Activated T-helper 2 cell treated with anti-CD3 and anti-CD28 coated beads, Interferon-gamma antibody, Interleukin-2, Interleukin-4, amounts not matched to agents 10 μg/mL and 5 μg/mL and 100 μg/mL, durations not matched to agents 14 hours and 24 hours and 36 hours (primary cell): ENCODE measurements at regions of chr4 and their contacts with region 1.

Region 1: GRCh38 chr4:39638354-39639240 is at the start of gene SMIM14:
- DNase-seq: peak; percentile 86
- H3K4me3 Mint-ChIP-seq: peak within 1 kb of the TSS; percentile 86
- H3K27ac Mint-ChIP-seq: peak within 1 kb of the TSS; percentile 67
- H3K4me1 Mint-ChIP-seq: peaks cover 27% of the 10 kb centered on the region
- H3K27me3 Mint-ChIP-seq: peaks cover 28% of the 10 kb centered on the region
- total RNA-seq, gene SMIM14: 1.7 and 1.9 TPM in 2 replicates

Region 2: DNA sequence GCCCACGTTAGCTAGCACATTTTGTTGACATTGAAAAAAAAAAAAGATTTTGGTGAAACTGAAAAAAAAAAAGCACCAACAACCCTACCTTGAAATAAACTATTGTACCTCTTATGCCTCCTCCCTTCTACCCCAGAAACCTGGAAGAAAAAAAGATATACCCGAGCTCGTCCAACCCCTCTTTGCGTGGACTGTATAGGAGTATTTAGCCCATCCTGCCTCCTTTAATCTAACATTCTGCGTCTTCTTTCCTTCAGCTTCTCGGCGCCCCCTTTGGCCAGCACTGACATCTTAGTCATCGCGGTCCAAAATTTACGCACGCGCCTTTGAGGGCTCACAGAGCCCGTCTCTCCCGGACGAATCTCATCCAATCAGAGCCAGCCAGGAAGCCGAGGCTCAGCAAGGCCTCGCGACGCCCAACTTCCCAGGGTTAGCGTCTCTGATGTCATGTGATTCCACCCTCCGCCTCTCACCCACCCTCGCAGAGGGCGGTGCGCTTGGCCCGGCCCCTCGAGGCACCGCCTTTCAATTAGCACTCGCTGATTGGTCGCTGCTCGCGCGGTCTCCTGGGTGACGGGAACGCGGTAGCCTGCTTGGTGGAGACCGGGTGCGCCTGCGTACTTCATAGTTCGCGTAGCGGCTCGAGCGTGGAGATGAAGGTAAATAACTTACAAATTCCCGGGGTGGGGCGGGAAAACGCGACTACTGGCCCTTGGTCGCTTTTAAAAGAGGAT is 456.5 kb before region 1 on chr4 and contains the start of gene WDR19:
- intact Hi-C with region 1: loop called (anchors 1 kb)
- DNase-seq: peak; percentile 99
- H3K4me3 Mint-ChIP-seq: no peak within 1 kb of the TSS
- H3K27ac Mint-ChIP-seq: no peak within 1 kb of the TSS
- H3K4me1 Mint-ChIP-seq: peaks cover 9% of the 10 kb centered on the region
- H3K27me3 Mint-ChIP-seq: peaks cover 7% of the 10 kb centered on the region
- total RNA-seq, gene WDR19: 8.9 and 10.5 TPM in 2 replicates

Region 3: GRCh38 chr4:39469429-39470077 is 169.0 kb before region 1 on chr4:
- intact Hi-C with region 1: loop called (anchors 1 kb)
- DNase-seq: no peak
- H3K4me3 Mint-ChIP-seq: no peak overlapping the region
- H3K27ac Mint-ChIP-seq: peak overlapping the region; percentile 60
- H3K4me1 Mint-ChIP-seq: peaks cover 13% of the 10 kb centered on the region
- H3K27me3 Mint-ChIP-seq: no peaks in the 10 kb centered on the region

Region 4: GRCh38 chr4:39527273-39528060 is 111.1 kb before region 1 on chr4 and contains the start of gene UGDH:
- intact Hi-C with region 1: loop called (anchors 1 kb)
- DNase-seq: peak; percentile 90
- H3K4me3 Mint-ChIP-seq: peak within 1 kb of the TSS; percentile 98
- H3K27ac Mint-ChIP-seq: peak within 1 kb of the TSS; percentile 94
- H3K4me1 Mint-ChIP-seq: peaks cover 16% of the 10 kb centered on the region
- H3K27me3 Mint-ChIP-seq: no peaks in the 10 kb centered on the region
- total RNA-seq, gene UGDH: 34.8 and 40.1 TPM in 2 replicates

Region 5: DNA sequence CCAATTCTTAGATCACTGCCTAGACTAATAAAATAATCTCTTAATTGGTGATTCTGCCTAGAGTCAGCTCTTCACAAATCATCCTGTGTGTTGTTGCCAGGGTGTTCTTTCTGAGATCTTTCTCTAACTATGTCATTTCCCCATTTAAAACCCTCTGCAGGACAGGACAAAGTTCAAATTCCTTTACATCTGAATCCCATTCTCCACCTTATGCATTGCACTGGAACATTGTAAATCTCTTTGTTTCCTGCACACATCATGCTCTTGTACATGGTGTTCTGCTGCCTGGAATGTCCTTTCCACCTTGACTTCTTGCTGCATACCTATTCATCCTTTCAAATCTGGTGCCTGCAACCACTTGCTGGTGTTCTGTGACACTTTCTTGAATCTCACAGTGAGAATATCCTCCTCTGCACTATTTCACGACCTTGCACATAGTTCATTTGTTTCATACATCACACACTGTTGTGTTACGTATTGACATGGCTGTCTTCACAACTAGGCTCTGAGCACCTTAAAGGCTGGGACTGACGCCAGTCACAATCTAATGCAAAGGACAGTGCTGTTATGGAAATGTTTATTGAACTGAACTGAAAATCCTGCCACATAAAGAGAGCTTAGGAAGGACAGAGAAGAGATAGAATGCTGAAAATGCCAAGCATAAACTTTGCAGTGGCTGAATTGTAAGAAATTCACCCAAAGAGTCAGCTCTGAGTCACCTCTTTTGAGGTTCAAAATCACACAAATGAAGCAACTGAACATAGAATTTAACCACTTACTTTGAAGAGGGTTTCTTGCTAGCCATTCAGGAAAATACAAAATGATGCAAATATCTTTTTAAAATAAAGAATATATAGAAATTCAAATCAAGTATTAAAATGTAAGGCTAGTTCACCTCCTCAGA is 26.5 kb after region 1 on chr4:
- intact Hi-C with region 1: no loop called
- DNase-seq: no peak
- H3K4me3 Mint-ChIP-seq: no peak overlapping the region
- H3K27ac Mint-ChIP-seq: no peak overlapping the region
- H3K4me1 Mint-ChIP-seq: no peaks in the 10 kb centered on the region
- H3K27me3 Mint-ChIP-seq: peaks cover 4% of the 10 kb centered on the region